Ascending aorta (tissue), 2 donors: ENCODE measurements at regions of chr10 and their contacts with region 1.

Region 1: DNA sequence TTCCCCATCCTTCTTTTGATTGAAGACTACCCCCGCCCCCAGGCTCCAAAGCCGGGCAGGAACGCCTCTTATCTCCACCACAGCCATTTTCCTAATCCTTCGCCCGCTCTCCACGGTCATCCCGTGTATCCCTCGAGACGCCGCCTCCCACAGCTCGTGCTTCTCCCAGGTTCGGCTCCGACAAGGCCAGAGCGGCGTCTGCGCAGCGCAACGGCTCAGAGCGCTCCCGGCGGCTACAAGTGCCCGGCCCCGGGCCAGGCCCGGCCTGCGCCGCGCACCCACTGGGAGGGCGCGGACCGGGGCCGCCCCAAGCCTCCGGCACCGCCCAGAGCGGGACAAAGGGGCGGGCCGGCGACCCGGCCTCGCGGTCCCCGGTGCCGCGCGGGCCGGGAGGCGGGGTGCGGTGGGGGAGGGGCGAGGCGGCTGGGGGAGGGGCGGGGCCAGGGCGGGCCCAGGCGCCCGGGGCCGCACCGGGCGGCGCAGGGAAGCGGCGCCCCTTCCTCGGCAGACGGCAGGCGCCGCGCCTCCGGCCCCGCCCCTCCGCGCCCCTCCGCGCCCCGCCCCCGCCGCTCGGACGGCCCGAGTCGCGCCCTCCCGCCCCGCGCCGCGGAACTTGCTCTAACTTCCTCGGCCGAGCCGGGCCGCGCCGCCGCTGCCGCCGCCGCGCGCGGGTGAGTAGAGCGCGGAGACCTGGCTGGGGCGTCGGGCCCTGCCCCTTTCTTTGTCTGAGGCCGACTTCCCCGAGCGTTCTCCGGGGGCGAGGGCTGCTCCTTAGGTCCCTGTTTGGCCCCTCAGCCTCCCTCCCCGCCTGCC is at the start of gene TSPAN14:
- DNase-seq: peak; percentile 39 to 91
- H3K4me3 ChIP-seq: peak within 1 kb of the TSS; percentile 80 to 93
- H3K27ac ChIP-seq: peak within 1 kb of the TSS; percentile 92 to 94
- H3K4me1 ChIP-seq: peaks cover 3 to 14% of the 10 kb centered on the region in 2 donors
- H3K27me3 ChIP-seq: no peaks in the 10 kb centered on the region
- CTCF ChIP-seq: no peak
- total RNA-seq, gene TSPAN14: 161 TPM

Region 2: GRCh38 chr10:80382989-80383388 is 70.9 kb before region 1 on chr10:
- intact Hi-C with region 1: loop called (anchors 2 kb)
- DNase-seq: no peak
- H3K4me3 ChIP-seq: no peak overlapping the region
- H3K27ac ChIP-seq: no peak overlapping the region
- H3K4me1 ChIP-seq: peaks cover 4 to 23% of the 10 kb centered on the region in 2 donors
- H3K27me3 ChIP-seq: no peaks in the 10 kb centered on the region
- CTCF ChIP-seq: peak; percentile 40 to 72 (median 55)

Region 3: DNA sequence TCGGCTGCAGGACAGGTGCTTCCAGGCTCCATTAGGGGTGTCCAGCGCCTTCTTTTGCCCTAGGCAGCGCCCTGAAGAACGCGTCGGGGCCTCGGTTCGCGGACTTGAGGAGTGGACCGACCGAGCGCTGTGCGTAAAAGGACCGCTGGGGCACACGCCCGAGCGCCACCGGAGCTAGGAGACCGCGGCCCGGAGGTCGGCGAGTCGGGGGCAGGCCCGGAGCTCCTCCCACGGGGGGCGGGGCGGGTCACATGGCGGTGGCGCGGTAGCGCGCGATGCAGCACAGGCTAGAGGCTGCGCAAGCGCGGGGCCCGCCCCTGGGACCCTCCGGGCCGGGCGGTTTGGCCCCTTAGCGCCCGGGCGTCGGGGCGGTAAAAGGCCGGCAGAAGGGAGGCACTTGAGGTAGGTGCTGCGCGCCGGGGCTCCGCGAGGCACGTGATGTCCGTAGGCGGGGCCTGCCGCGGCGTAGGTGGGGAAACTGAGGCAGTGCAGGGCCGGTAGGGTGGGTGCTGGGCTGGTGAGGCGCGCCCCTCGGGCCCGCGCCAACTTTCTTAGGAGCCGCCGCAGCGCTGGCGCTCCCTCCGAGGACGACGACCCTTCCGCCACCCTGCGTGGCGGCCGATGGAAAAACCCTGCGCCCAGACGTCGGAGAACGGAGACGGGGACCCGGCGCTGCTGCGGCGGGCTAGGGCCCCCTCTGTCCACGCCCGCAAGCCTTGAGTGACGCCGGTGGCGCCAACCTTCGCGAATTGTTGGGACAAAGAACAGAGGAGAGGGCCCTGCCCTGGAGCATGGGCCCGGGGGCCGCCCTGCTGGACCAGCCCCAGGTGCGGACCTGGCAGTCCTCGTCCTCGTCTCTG is 45.4 kb before region 1 on chr10 and contains the start of gene PRXL2A:
- intact Hi-C with region 1: loop called (anchors 2 kb)
- DNase-seq: peak; percentile 18 to 86
- H3K4me3 ChIP-seq: peak within 1 kb of the TSS; percentile 72 to 90
- H3K27ac ChIP-seq: peak within 1 kb of the TSS; percentile 62 to 76
- H3K4me1 ChIP-seq: peaks cover 0 to 7% of the 10 kb centered on the region in 2 donors
- H3K27me3 ChIP-seq: no peaks in the 10 kb centered on the region
- CTCF ChIP-seq: no peak
- total RNA-seq, gene PRXL2A: 22.7 TPM

Region 4: GRCh38 chr10:80493522-80494051 is 39.7 kb after region 1 on chr10:
- intact Hi-C with region 1: no loop called
- DNase-seq: peak in 1 of 2 donors; percentile 56
- H3K4me3 ChIP-seq: no peak overlapping the region
- H3K27ac ChIP-seq: no peak overlapping the region
- H3K4me1 ChIP-seq: peaks cover 7 to 30% of the 10 kb centered on the region in 2 donors
- H3K27me3 ChIP-seq: no peaks in the 10 kb centered on the region
- CTCF ChIP-seq: no peak

Region 5: DNA sequence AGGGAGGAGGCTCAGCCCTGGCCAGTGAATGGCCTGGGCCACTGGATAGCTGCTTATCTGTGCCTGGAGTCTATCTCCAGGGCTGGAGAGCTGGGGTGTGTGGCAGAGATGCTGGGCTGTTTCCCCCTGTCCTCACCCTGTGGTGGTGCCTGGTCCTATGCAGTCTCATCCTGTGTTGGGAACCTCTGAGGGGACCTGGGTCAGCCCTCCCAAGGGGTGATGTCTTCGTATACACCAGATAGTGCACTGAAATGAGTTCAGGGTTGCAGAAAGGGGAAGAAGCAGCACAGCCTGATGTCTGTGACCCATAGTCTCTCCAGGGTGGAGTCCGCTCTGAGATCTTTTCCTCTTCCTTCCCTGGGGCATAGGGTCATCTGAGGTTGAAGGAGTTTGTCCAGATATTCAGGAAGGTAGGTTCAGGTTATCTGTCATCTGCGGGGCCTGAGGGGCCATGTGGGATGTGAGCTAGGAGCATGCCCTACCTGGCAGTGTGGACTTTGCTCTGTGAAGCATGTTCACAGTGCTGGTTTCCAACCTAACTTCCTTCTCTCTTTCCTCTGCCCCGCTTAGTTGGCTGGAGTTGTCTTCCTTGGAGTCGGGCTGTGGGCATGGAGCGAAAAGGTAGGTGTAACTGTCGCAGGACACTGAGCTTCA is 50.4 kb after region 1 on chr10:
- intact Hi-C with region 1: loop called (anchors 2 kb)
- DNase-seq: no peak
- H3K4me3 ChIP-seq: no peak overlapping the region
- H3K27ac ChIP-seq: peak overlapping the region; percentile 48 to 76
- H3K4me1 ChIP-seq: peaks cover 0 to 26% of the 10 kb centered on the region in 2 donors
- H3K27me3 ChIP-seq: no peaks in the 10 kb centered on the region
- CTCF ChIP-seq: no peak

Region 6: GRCh38 chr10:80535671-80536365 is 81.9 kb after region 1 on chr10:
- intact Hi-C with region 1: no loop called
- DNase-seq: peak in 1 of 2 donors; percentile 70
- H3K4me3 ChIP-seq: peak overlapping the region; percentile 46 to 67
- H3K27ac ChIP-seq: peak overlapping the region; percentile 30 to 44
- H3K4me1 ChIP-seq: no peaks in the 10 kb centered on the region
- H3K27me3 ChIP-seq: no peaks in the 10 kb centered on the region
- CTCF ChIP-seq: peak; percentile 46 to 59 (median 50)